ENCODE measurements at regions of chr22 and their contacts with region 1.

Region 1: GRCh38 chr22:38506118-38506962 is at the start of gene DDX17:
- DNase-seq: peak; percentile 93
- H3K4me3 Mint-ChIP-seq: peak within 1 kb of the TSS; percentile 99
- H3K27ac Mint-ChIP-seq: peak within 1 kb of the TSS; percentile 98
- H3K4me1 Mint-ChIP-seq: peaks cover 42% of the 10 kb centered on the region
- H3K27me3 Mint-ChIP-seq: no peaks in the 10 kb centered on the region
- total RNA-seq, gene DDX17: 356 and 358 TPM in 2 replicates

Region 2: GRCh38 chr22:38201710-38202436 is 304.5 kb before region 1 on chr22 and contains the start of gene MAFF:
- intact Hi-C with region 1: loop called (anchors 5 kb)
- DNase-seq: peak; percentile 80
- H3K4me3 Mint-ChIP-seq: peak within 1 kb of the TSS; percentile 89
- H3K27ac Mint-ChIP-seq: peak within 1 kb of the TSS; percentile 82
- H3K4me1 Mint-ChIP-seq: peaks cover 42% of the 10 kb centered on the region
- H3K27me3 Mint-ChIP-seq: peaks cover 3% of the 10 kb centered on the region
- total RNA-seq, gene MAFF: 12.3 and 12.5 TPM in 2 replicates

Region 3: DNA sequence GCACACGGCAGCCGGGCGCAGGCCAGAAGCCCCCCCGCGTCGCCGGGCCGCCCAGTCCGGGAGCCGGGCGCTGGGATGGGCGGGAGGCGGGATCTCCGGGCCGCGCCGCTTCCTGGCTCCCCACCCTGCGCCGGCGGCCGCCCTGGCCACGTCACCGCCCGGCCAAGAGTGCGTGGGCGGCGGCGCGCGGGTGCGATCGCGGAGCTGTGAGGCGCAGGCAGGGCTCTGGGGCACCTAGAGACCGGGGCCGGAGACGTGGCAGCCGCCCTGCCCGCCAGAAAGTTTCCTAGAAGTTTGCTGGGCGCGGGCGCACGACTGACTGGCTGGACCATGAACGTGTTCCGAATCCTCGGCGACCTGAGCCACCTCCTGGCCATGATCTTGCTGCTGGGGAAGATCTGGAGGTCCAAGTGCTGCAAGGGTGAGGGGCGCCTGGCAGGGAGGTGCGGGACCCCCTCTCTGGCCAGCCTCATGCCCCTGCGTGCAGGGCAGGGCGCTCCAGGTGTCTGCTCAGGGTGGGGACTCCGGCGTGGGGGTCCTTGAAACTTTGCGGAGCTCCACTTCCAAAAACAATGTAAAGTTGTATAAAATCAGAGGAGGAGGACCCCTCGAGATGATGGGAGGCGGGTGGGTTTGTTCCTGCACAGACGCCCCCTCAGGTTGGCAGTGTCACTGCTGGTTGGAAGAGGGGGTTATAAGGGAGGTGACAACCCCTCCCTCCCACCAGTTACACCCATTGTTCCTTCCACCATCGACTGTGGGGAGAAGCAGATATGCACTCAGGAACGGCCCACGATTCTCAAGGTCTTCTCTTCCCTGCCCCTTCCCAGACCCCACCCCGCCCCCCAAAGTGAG is 38.2 kb before region 1 on chr22 and contains the start of gene KDELR3:
- intact Hi-C with region 1: loop called (anchors 2 kb)
- DNase-seq: peak; percentile 39
- H3K4me3 Mint-ChIP-seq: peak within 1 kb of the TSS; percentile 76
- H3K27ac Mint-ChIP-seq: peak within 1 kb of the TSS; percentile 70
- H3K4me1 Mint-ChIP-seq: peaks cover 14% of the 10 kb centered on the region
- H3K27me3 Mint-ChIP-seq: peaks cover 38% of the 10 kb centered on the region
- total RNA-seq, gene KDELR3: 1.1 and 1.3 TPM in 2 replicates

Region 4: GRCh38 chr22:38569972-38570778 is 63.8 kb after region 1 on chr22 and contains the start of gene DMC1:
- intact Hi-C with region 1: loop called (anchors 1 kb)
- DNase-seq: peak; percentile 86
- H3K4me3 Mint-ChIP-seq: peak within 1 kb of the TSS; percentile 90
- H3K27ac Mint-ChIP-seq: peak within 1 kb of the TSS; percentile 92
- H3K4me1 Mint-ChIP-seq: peaks cover 16% of the 10 kb centered on the region
- H3K27me3 Mint-ChIP-seq: no peaks in the 10 kb centered on the region
- total RNA-seq, gene DMC1: 11.2 and 11.7 TPM in 2 replicates

Region 5: GRCh38 chr22:38705235-38706100 is 199.1 kb after region 1 on chr22 and contains the start of gene GTPBP1:
- intact Hi-C with region 1: loop called (anchors 1 kb)
- DNase-seq: peak; percentile 96
- H3K4me3 Mint-ChIP-seq: peak within 1 kb of the TSS; percentile 94
- H3K27ac Mint-ChIP-seq: peak within 1 kb of the TSS; percentile 97
- H3K4me1 Mint-ChIP-seq: peaks cover 55% of the 10 kb centered on the region
- H3K27me3 Mint-ChIP-seq: peaks cover 2% of the 10 kb centered on the region
- total RNA-seq, gene GTPBP1: 102 and 111 TPM in 2 replicates

Measured in activated T-helper 1 cell treated with anti-CD3 and anti-CD28 coated beads, Interleukin-12 subunit alpha, Interleukin-12 subunit beta, Interleukin-2, Interleukin-4 antibody, amounts not matched to agents 30 ng/mL and 10 ng/mL and 1 ng/mL, durations not matched to agents 14 hours and 24 hours and 36 hours (primary cell).